AG04450 (cell line): ENCODE measurements at regions of chr2 and their contacts with region 1.

Region 1: GRCh38 chr2:169776252-169776761 is 22.4 kb upstream of the SSB start:
- DNase-seq: no peak
- H3K4me3 ChIP-seq: no peak overlapping the region
- H3K27ac ChIP-seq: no peak overlapping the region
- H3K27me3 ChIP-seq: no peaks in the 10 kb centered on the region
- CTCF ChIP-seq: no peak

Region 2: DNA sequence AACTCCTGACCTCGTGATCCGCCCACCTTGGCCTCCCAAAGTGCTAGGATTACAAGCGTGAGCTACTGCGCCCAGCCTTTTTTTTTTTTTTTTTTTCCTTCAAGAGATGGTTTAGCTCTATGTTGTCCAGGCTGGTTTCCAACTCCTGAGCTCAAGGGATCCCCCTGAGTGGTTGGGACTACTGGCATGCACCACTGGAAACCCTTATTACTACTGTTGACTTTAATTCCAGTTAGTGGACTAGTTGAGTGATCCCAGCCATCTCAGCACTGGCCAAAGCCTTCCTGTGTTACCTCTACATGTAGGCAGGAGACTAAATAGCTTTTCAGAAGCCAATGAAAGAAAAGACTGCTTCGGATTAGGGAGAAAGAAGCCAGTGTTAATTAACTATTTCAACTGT is 14.3 kb after region 1 on chr2:
- CTCF ChIA-PET with region 1: interaction called, 15 read pairs
- POLR2A ChIA-PET with region 1: interaction called, 3 read pairs
- DNase-seq: no peak
- H3K4me3 ChIP-seq: no peak overlapping the region
- H3K27ac ChIP-seq: no peak overlapping the region
- H3K27me3 ChIP-seq: peaks cover 3% of the 10 kb centered on the region
- CTCF ChIP-seq: no peak

Region 3: DNA sequence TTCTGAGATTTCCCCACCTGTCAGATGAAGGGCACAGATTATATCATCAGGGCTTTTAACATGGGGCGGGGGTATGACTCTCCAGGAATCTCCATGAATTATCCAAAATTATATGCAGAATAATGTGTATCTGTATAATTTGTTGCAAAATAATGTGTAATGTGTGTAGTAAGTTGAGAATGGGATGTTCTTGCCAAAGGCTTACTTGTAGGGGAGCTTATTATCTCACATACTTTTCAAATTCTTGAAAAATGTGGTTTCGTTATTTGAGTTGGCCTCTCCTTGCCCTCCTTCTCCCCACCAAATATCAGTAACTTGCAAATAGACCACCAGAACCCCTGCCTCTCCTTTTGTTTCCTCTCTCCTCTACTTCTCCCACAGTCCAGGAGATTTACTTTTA is 86.5 kb after region 1 on chr2:
- CTCF ChIA-PET with region 1: no interaction called
- POLR2A ChIA-PET with region 1: no interaction called
- DNase-seq: no peak
- H3K4me3 ChIP-seq: no peak overlapping the region
- H3K27ac ChIP-seq: no peak overlapping the region
- H3K27me3 ChIP-seq: no peaks in the 10 kb centered on the region
- CTCF ChIP-seq: no peak